Natural killer cell (primary cell): ENCODE measurements at regions of chr7 and their contacts with region 1.

Region 1: GRCh38 chr7:31744294-31744874 is 57.4 kb downstream of the PPP1R17 start:
- DNase-seq: peak; percentile 17 to 38
- ATAC-seq: peak; percentile 40 to 67 (median 60)
- H3K4me3 ChIP-seq: no peak overlapping the region
- H3K4me3 Mint-ChIP-seq: no peak overlapping the region
- H3K27ac ChIP-seq: no peak overlapping the region
- H3K27ac Mint-ChIP-seq: no peak overlapping the region
- H3K4me1 ChIP-seq: no peaks in the 10 kb centered on the region
- H3K4me1 Mint-ChIP-seq: no peaks in the 10 kb centered on the region
- H3K27me3 ChIP-seq: no peaks in the 10 kb centered on the region
- H3K27me3 Mint-ChIP-seq: peaks cover 7 to 15% of the 10 kb centered on the region in 2 donors
- CTCF ChIP-seq: peak; percentile 63

Region 2: DNA sequence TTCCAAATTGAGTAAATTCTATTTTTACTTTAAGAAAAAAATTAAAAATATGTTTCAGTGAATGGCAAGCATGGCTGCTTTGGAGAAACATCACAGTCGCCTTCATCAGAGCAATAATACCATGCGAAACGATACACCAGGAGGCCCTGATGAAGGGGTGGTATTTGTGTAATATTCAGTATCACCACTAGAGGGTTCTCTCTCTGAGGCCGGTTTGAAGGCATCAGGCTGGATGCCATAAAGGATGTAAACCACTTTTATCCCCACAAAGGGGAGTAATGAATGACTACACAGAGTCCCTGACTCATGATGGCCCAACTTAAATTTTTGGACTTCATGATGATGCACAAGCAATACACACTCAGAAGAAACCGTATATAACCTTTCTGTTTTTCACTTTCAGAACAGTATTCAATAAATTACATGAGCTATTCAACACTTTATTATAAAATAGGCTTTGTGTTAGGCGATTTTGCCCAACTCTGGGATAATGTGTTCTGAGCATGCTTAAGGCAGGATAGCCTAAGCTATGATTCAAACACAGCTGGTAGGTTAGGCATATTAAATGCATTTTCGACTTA is 38.1 kb after region 1 on chr7:
- intact Hi-C with region 1: no loop called
- DNase-seq: peak in 1 of 2 donors; percentile 3
- ATAC-seq: peak; percentile 61 to 70 (median 62)
- H3K4me3 ChIP-seq: no peak overlapping the region
- H3K4me3 Mint-ChIP-seq: no peak overlapping the region
- H3K27ac ChIP-seq: no peak overlapping the region
- H3K27ac Mint-ChIP-seq: no peak overlapping the region
- H3K4me1 ChIP-seq: no peaks in the 10 kb centered on the region
- H3K4me1 Mint-ChIP-seq: no peaks in the 10 kb centered on the region
- H3K27me3 ChIP-seq: no peaks in the 10 kb centered on the region
- H3K27me3 Mint-ChIP-seq: no peaks in the 10 kb centered on the region
- CTCF ChIP-seq: peak; percentile 64

Region 3: DNA sequence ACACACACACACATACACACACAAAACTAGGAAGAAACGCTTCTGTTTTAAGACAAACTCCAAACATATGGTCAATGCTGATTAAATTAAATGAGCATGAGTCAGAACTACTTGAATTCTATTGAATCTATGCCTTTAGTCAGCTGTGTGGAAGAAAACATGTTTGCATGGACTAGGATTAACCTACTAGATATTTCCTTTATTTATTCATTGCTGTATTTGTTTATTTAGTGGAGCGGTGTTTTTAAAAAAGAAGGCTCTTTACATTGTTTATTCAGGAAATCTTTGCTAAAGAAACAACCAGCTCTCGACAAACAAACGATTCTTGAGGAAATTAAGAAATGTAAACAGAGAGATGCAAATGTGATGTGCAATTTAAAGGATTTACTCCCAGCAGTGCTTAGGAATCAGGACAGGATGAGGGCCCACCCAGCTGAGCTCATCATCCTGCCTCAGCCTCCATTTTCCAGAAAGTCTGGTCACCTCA is 242.6 kb after region 1 on chr7:
- intact Hi-C with region 1: no loop called
- DNase-seq: no peak
- ATAC-seq: no peak
- H3K4me3 ChIP-seq: no peak overlapping the region
- H3K4me3 Mint-ChIP-seq: no peak overlapping the region
- H3K27ac ChIP-seq: no peak overlapping the region
- H3K27ac Mint-ChIP-seq: no peak overlapping the region
- H3K4me1 ChIP-seq: no peaks in the 10 kb centered on the region
- H3K4me1 Mint-ChIP-seq: peaks cover 0 to 5% of the 10 kb centered on the region in 2 donors
- H3K27me3 ChIP-seq: no peaks in the 10 kb centered on the region
- H3K27me3 Mint-ChIP-seq: no peaks in the 10 kb centered on the region
- CTCF ChIP-seq: no peak

Region 4: DNA sequence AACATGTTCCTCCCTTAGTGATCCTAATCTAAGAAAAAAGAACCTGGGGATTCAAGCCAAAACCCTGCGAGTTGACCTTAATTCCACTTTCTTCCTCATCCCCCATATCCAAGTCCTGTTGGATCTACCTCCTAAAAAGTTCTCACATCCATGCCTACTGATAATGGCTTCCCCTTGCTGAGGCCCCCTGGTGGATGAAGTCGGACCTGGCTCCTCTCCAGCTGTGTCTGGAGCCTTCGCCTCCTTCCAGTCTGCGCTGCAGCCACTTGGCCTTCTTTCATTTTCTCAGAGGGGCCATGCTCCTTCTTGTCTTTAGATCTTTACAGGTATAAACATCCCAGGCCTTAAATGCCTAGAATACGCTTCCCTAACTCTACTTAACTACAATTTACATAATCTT is 317.8 kb after region 1 on chr7:
- intact Hi-C with region 1: loop called (anchors 10 kb)
- DNase-seq: no peak
- ATAC-seq: no peak
- H3K4me3 ChIP-seq: no peak overlapping the region
- H3K4me3 Mint-ChIP-seq: no peak overlapping the region
- H3K27ac ChIP-seq: no peak overlapping the region
- H3K27ac Mint-ChIP-seq: no peak overlapping the region
- H3K4me1 ChIP-seq: no peaks in the 10 kb centered on the region
- H3K4me1 Mint-ChIP-seq: no peaks in the 10 kb centered on the region
- H3K27me3 ChIP-seq: no peaks in the 10 kb centered on the region
- H3K27me3 Mint-ChIP-seq: no peaks in the 10 kb centered on the region
- CTCF ChIP-seq: peak; percentile 31

Region 5: GRCh38 chr7:32204361-32205018 is 460.1 kb after region 1 on chr7:
- intact Hi-C with region 1: loop called (anchors 2 kb)
- DNase-seq: no peak
- ATAC-seq: no peak
- H3K4me3 ChIP-seq: no peak overlapping the region
- H3K4me3 Mint-ChIP-seq: no peak overlapping the region
- H3K27ac ChIP-seq: no peak overlapping the region
- H3K27ac Mint-ChIP-seq: no peak overlapping the region
- H3K4me1 ChIP-seq: no peaks in the 10 kb centered on the region
- H3K4me1 Mint-ChIP-seq: no peaks in the 10 kb centered on the region
- H3K27me3 ChIP-seq: no peaks in the 10 kb centered on the region
- H3K27me3 Mint-ChIP-seq: no peaks in the 10 kb centered on the region
- CTCF ChIP-seq: no peak

Region 6: GRCh38 chr7:32347244-32347828 is 603.0 kb after region 1 on chr7:
- intact Hi-C with region 1: loop called (anchors 2 kb)
- DNase-seq: peak in 1 of 2 donors; percentile 24
- ATAC-seq: peak in 1 of 3 donors; percentile 39
- H3K4me3 ChIP-seq: no peak overlapping the region
- H3K4me3 Mint-ChIP-seq: no peak overlapping the region
- H3K27ac ChIP-seq: no peak overlapping the region
- H3K27ac Mint-ChIP-seq: no peak overlapping the region
- H3K4me1 ChIP-seq: no peaks in the 10 kb centered on the region
- H3K4me1 Mint-ChIP-seq: no peaks in the 10 kb centered on the region
- H3K27me3 ChIP-seq: no peaks in the 10 kb centered on the region
- H3K27me3 Mint-ChIP-seq: peaks cover 0 to 2% of the 10 kb centered on the region in 2 donors
- CTCF ChIP-seq: peak; percentile 82